Gastrocnemius medialis (tissue), 4 donors: ENCODE measurements at regions of chr9 and their contacts with region 1.

Region 1: GRCh38 chr9:126781186-126782052 is 23.4 kb upstream of the ZBTB43 start:
- DNase-seq: peak; percentile 51 to 74
- ATAC-seq: peak; percentile 61 to 83
- H3K4me3 ChIP-seq: peak overlapping the region in 3 of 4 donors; percentile 23 to 42 (median 30)
- H3K27ac ChIP-seq: no peak overlapping the region
- H3K4me1 ChIP-seq: peaks cover 13 to 16% of the 10 kb centered on the region in 2 donors
- H3K27me3 ChIP-seq: peaks cover 10 to 12% (median 10%) of the 10 kb centered on the region in 3 donors
- CTCF ChIP-seq: peak; percentile 80 to 97 (median 95)
- POLR2A ChIP-seq: no peak

Region 2: DNA sequence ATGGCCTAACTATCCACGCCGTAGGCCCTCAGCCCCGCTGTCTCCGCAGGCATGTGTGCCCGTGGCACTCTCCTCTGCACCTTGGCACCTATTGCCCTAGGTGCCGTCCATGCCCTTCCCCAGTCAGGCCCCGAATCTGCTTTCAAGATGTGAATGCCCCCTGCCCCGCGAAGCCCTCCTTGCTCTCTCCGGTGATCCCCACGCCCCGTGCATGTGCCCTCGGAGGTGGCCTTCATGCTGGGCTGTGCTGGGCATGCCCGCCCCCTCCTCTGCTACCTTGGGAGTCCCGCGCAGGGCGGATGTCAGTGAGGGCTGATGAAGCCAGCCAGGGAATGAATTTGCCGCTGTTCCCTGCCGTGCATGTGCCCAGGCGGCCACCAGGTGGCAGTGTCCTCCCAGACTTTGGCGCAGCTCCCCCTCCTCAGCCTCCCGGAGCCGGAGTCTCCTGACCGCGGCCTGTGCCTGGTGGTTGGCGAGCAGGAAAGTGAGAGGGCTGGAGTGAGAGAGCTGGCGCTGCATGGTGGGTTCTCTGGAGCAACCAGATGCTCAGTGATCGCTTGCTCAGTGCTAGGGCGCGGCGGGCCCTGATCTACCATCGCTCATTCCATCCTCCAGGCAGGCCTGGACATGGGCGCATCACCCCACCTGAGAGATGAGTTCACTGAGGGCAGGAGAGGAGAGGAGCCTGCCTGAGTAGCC is 280.6 kb before region 1 on chr9:
- in situ Hi-C with region 1: no loop called
- intact Hi-C with region 1: loop called (anchors 5 kb)
- DNase-seq: peak; percentile 38 to 47
- ATAC-seq: peak; percentile 58 to 69
- H3K4me3 ChIP-seq: no peak overlapping the region
- H3K27ac ChIP-seq: no peak overlapping the region
- H3K4me1 ChIP-seq: peaks cover 5 to 10% of the 10 kb centered on the region in 2 donors
- H3K27me3 ChIP-seq: no peaks in the 10 kb centered on the region
- CTCF ChIP-seq: peak; percentile 55 to 96 (median 92)
- POLR2A ChIP-seq: no peak

Region 3: DNA sequence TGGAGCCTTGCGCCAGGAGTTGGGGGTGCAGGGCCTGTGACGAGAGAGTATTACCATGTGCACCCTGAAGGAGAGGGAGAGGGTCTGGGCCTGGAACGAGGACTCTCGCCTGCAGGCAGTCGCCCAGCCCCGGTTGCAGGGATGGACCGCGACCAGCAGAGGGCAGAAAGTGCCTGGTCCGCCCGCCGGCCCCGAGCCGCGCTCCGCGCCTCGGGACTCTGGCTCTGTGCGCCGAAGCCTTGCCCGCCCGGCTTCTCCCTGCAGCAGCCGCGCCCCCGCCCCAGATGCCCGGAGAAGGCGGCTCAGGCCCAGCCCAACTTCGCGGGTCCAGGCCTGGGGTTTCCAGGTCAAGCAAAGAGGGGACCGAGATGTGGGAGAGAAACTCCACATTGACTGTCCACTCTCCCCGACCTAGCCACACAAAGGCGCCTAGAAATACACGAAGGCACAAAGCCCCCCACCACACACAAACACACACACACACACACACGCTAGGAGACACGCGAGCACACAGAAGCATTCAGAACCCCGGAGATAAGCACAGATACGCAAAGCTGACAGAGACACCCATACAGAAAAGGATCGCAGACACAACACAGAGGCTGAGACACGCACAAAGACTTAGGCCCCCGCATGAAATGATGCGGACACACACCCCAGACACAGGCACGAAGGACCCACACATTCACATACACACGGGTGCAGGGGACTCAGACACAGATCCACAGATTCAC is 169.7 kb before region 1 on chr9:
- in situ Hi-C with region 1: loop called in 1 of 4 experiments (anchors 10 kb)
- intact Hi-C with region 1: loop called (anchors 1 kb)
- DNase-seq: peak in 1 of 2 donors; percentile 27
- ATAC-seq: peak; percentile 58 to 71
- H3K4me3 ChIP-seq: peak overlapping the region; percentile 14 to 42 (median 30)
- H3K27ac ChIP-seq: no peak overlapping the region
- H3K4me1 ChIP-seq: peaks cover 9 to 16% of the 10 kb centered on the region in 2 donors
- H3K27me3 ChIP-seq: peaks cover 57 to 78% (median 66%) of the 10 kb centered on the region in 3 donors
- CTCF ChIP-seq: peak; percentile 35 to 80 (median 72)
- POLR2A ChIP-seq: no peak

Region 4: DNA sequence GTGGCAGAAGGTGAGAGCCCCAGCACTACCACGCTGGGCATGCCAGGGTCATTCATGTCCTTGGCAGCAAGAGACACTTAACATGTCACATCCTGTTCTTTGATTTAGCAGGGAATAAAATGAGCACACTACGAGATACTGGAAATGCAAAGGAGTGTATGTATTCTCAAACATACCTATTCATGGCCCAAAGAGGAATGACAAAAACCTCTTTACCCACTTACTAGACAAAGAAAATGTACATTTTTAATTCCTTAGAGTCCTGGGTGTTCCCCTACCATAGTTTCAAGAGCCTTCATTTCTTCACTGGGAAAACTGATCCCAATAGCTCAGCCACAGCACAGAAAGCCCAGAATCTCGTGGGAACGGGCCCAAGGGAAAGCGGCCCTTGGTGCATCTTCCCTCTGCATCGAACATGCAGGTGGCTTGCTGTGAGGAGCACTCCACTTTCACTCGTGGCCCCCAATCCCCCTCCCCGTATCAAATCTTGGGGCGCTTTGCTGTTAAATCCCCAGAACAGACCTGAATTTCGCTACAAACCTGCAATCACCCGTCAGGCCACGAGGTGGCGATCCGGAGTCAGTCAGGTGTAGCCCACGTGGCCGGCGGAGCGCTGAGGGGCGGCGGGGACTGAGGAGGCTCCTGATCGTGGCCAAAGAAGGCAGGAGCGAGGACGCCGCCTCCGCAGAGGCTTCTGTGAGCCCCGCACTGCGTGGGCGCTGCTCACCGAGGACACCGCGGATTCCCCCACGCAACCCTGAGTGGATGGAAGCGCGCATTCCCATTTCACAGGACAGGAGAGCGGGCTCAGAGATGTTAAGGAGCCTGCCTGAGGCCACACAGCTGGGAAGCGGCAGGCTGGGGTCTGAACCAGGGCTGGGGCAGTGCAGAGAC is 76.3 kb before region 1 on chr9:
- in situ Hi-C with region 1: loop called in 3 of 4 experiments (anchors 5 to 10 kb)
- intact Hi-C with region 1: loop called (anchors 1 kb)
- DNase-seq: peak; percentile 49 to 61
- ATAC-seq: peak; percentile 62 to 84
- H3K4me3 ChIP-seq: peak overlapping the region; percentile 35 to 55 (median 40)
- H3K27ac ChIP-seq: no peak overlapping the region
- H3K4me1 ChIP-seq: peaks cover 0 to 10% of the 10 kb centered on the region in 2 donors
- H3K27me3 ChIP-seq: peaks cover 11 to 21% (median 14%) of the 10 kb centered on the region in 3 donors
- CTCF ChIP-seq: peak; percentile 82 to 94 (median 91)
- POLR2A ChIP-seq: no peak